K562 (cell line): ENCODE measurements at regions of chr10 and their contacts with region 1.

Region 1: GRCh38 chr10:63720072-63720537 is 198.9 kb downstream of the REEP3 start:
- DNase-seq: peak; percentile 46 to 66 (median 61)
- ATAC-seq: peak; percentile 56
- H3K4me3 ChIP-seq: no peak overlapping the region
- H3K27ac ChIP-seq: no peak overlapping the region
- H3K4me1 ChIP-seq: no peaks in the 10 kb centered on the region
- H3K27me3 ChIP-seq: peaks cover 20 to 40% of the 10 kb centered on the region in 2 experiments
- CTCF ChIP-seq: peak; percentile 82 to 98 (median 83)
- EP300 ChIP-seq: no peak
- POLR2A ChIP-seq: no peak
- RAD21 ChIP-seq: peak; percentile 96

Region 2: DNA sequence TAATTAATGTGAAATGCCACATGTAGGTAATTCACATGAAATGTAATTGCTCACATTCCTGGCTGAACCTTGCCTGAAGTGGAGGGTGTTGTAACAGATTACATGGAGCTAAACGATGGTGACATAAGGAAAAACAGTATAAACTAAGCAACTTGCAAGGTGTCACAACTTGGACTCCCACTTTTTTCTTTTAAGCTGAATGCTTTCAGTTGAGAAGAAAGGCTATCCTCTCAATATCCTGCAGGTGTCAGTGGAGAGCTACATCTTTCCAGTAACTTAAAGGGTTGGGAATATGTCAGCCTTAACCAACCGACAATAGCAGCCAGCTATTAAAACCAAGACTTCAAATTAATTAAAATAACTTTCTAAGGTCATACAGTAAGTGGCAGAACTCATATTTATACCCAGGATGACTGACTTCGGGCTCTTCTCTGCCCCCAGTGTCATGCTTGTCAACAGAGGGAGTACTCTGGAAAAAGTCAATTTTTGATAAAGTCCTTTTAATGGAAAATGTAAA is 553.3 kb before region 1 on chr10:
- CTCF ChIA-PET with region 1: interaction called, 63 read pairs
- POLR2A ChIA-PET with region 1: interaction called, 14 read pairs
- in situ Hi-C with region 1: loop called (anchors 5 kb)
- intact Hi-C with region 1: loop called (anchors 1 kb)
- DNase-seq: peak; percentile 40 to 80 (median 61)
- ATAC-seq: peak; percentile 83
- H3K4me3 ChIP-seq: no peak overlapping the region
- H3K27ac ChIP-seq: no peak overlapping the region
- H3K4me1 ChIP-seq: no peaks in the 10 kb centered on the region
- H3K27me3 ChIP-seq: no peaks in the 10 kb centered on the region
- CTCF ChIP-seq: peak; percentile 68 to 89 (median 75)
- EP300 ChIP-seq: no peak
- POLR2A ChIP-seq: 0 out of 2 replicates have a peak, but pooled peaks have one; percentile 38
- RAD21 ChIP-seq: peak; percentile 91

Region 3: GRCh38 chr10:63217120-63217605 is 502.9 kb before region 1 on chr10:
- CTCF ChIA-PET with region 1: interaction called, 11 read pairs
- POLR2A ChIA-PET with region 1: interaction called, 4 read pairs
- in situ Hi-C with region 1: no loop called
- intact Hi-C with region 1: loop called (anchors 1 kb)
- DNase-seq: peak in 2 of 4 experiments; percentile 39 to 61
- ATAC-seq: peak; percentile 79
- H3K4me3 ChIP-seq: no peak overlapping the region
- H3K27ac ChIP-seq: no peak overlapping the region
- H3K4me1 ChIP-seq: no peaks in the 10 kb centered on the region
- H3K27me3 ChIP-seq: no peaks in the 10 kb centered on the region
- CTCF ChIP-seq: peak; percentile 38 to 77 (median 47); a peak in 3 of 6 replicates
- EP300 ChIP-seq: no peak
- POLR2A ChIP-seq: no peak
- RAD21 ChIP-seq: peak; percentile 87 to 90

Region 4: GRCh38 chr10:63987212-63987611 is 267.1 kb after region 1 on chr10:
- CTCF ChIA-PET with region 1: no interaction called
- POLR2A ChIA-PET with region 1: no interaction called
- in situ Hi-C with region 1: no loop called
- intact Hi-C with region 1: no loop called
- DNase-seq: no peak
- ATAC-seq: no peak
- H3K4me3 ChIP-seq: no peak overlapping the region
- H3K27ac ChIP-seq: no peak overlapping the region
- H3K4me1 ChIP-seq: no peaks in the 10 kb centered on the region
- H3K27me3 ChIP-seq: no peaks in the 10 kb centered on the region
- CTCF ChIP-seq: 0 out of 6 replicates have a peak, but pooled peaks of 2 of the 3 experiments have one; percentile 2 to 34
- EP300 ChIP-seq: no peak
- POLR2A ChIP-seq: no peak
- RAD21 ChIP-seq: no peak